ENCODE measurements at regions of chr20 and their contacts with region 1.

Region 1: DNA sequence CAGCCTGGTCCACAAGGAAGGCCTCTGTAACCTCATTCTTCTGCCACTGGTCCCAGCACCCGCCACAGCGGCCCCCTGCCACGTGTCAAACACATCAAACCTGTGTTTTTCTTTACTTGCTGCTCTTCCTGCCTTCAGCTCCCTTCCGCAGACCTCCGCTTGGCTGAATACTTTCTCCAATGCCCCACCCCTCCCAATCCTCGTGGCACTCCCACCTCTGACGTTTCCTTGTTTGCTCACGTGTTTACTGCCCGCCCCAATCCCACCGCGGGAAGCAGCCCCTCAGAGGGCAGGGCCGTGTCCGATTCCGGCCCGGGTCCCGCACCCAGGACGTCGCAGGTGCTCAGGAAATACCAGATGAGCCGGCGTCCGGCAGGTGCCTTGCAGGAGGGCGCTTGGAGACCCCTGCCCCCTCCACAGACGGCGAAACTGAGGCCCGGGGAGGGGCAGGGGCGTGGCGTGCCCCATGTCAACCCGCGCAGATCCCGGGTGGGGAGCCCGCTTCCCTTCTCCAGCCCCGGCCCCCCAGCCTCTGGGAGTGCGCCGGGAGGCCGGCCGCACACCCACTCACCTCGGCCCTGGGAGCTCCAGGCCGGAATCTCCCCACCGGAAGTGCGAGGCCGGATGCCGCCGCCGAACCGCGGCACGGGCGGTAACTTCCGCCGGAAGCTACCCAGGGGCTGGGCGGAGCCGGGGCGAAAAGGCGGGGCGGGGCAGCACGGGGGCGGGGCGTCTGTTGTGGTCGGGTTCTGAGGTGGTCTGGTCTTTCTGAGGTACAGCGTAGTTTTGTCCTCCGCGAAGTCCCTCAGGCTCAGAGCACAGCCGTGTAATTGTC is 42.4 kb downstream of the ELMO2 start:
- DNase-seq: peak; percentile 80 to 91 (median 85)
- ATAC-seq: peak; percentile 87
- H3K4me3 ChIP-seq: peak overlapping the region; percentile 95
- H3K4me3 Mint-ChIP-seq: peak overlapping the region; percentile 89 to 98 (median 92)
- H3K27ac ChIP-seq: peak overlapping the region; percentile 99
- H3K27ac Mint-ChIP-seq: peak overlapping the region; percentile 77 to 98 (median 95)
- H3K4me1 ChIP-seq: peaks cover 60 to 67% of the 10 kb centered on the region in 2 donors
- H3K4me1 Mint-ChIP-seq: peaks cover 54 to 92% (median 74%) of the 10 kb centered on the region in 7 donors
- H3K27me3 ChIP-seq: no peaks in the 10 kb centered on the region
- H3K27me3 Mint-ChIP-seq: no peaks in the 10 kb centered on the region

Region 2: DNA sequence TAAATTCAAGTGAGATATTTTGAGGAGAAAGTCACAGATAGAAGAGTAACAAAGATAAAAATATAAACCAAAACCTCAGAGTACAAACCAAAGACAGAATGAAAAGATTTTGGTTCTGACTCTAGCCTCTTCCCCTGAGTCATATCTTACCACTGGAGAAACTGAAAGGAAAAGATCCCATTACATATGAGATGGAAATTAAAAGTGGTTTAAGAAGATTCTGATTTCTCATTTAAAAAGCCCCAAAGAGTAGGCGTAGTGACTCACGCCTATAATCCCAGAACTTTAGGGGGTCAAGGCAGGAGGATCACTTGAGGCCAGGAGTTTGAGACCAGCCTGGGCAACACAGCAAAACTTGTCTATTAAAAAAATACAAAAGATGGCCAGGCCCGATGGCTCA is 611.3 kb before region 1 on chr20:
- CTCF ChIA-PET with region 1: no interaction called
- POLR2A ChIA-PET with region 1: no interaction called
- intact Hi-C with region 1: no loop called
- DNase-seq: peak in 1 of 9 donors; percentile 28
- ATAC-seq: no peak
- H3K4me3 ChIP-seq: no peak overlapping the region
- H3K4me3 Mint-ChIP-seq: no peak overlapping the region
- H3K27ac ChIP-seq: no peak overlapping the region
- H3K27ac Mint-ChIP-seq: no peak overlapping the region
- H3K4me1 ChIP-seq: no peaks in the 10 kb centered on the region
- H3K4me1 Mint-ChIP-seq: peaks cover 0 to 6% (median 0%) of the 10 kb centered on the region in 7 donors
- H3K27me3 ChIP-seq: no peaks in the 10 kb centered on the region
- H3K27me3 Mint-ChIP-seq: peaks cover 5 to 30% (median 21%) of the 10 kb centered on the region in 5 donors

Region 3: DNA sequence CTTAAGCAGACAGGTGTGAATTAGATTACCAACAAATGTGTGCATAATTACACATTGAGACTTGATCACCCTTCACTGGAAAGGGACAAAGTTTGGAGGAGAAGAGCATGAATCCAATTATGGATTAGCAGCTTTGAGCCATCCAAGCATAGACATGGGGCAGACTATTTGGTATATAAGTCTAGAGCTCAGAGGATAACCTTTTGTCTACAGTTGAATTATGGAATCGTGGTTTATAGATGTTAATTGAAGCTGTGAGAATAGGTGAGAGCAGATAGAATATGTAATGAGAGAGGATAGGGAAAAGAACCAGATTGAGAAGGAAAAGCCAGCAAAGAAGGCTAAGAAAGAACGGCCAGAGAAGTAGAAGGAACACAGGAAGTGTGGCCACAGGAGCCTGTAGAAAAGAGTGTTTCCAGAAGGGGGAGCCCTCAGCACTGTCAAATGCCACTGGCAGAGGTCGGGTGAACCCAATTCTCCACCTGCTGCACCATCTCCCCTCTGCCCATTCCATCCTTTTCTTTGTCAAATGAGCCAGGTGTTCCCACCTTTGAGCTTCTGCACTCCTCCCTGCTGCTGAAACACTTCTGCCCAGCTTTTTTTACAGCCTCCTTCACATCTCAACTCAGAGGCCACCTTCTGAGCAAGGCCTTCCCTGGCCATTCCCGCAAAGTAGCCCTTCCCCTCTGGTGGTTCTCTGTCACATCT is 564.9 kb before region 1 on chr20:
- CTCF ChIA-PET with region 1: no interaction called
- POLR2A ChIA-PET with region 1: no interaction called
- intact Hi-C with region 1: loop called in 1 of 2 experiments (anchors 10 kb)
- DNase-seq: peak; percentile 25 to 70 (median 58)
- ATAC-seq: peak; percentile 96
- H3K4me3 ChIP-seq: no peak overlapping the region
- H3K4me3 Mint-ChIP-seq: no peak overlapping the region
- H3K27ac ChIP-seq: peak overlapping the region; percentile 24
- H3K27ac Mint-ChIP-seq: peak overlapping the region in 8 of 9 donors; percentile 1 to 92 (median 52)
- H3K4me1 ChIP-seq: peaks cover 4 to 7% of the 10 kb centered on the region in 2 donors
- H3K4me1 Mint-ChIP-seq: peaks cover 9 to 21% (median 11%) of the 10 kb centered on the region in 7 donors
- H3K27me3 ChIP-seq: no peaks in the 10 kb centered on the region
- H3K27me3 Mint-ChIP-seq: no peaks in the 10 kb centered on the region

Region 4: GRCh38 chr20:46089417-46090388 is 274.3 kb before region 1 on chr20 and contains the start of gene NCOA5:
- CTCF ChIA-PET with region 1: no interaction called
- POLR2A ChIA-PET with region 1: no interaction called
- intact Hi-C with region 1: loop called in 1 of 2 experiments (anchors 1 kb)
- DNase-seq: peak; percentile 90 to 95 (median 94)
- ATAC-seq: peak; percentile 98
- H3K4me3 ChIP-seq: peak within 1 kb of the TSS; percentile 73
- H3K4me3 Mint-ChIP-seq: peak within 1 kb of the TSS; percentile 86 to 95 (median 90)
- H3K27ac ChIP-seq: peak within 1 kb of the TSS; percentile 89
- H3K27ac Mint-ChIP-seq: peak within 1 kb of the TSS; percentile 86 to 95 (median 90)
- H3K4me1 ChIP-seq: peaks cover 24 to 36% of the 10 kb centered on the region in 2 donors
- H3K4me1 Mint-ChIP-seq: peaks cover 29 to 53% (median 51%) of the 10 kb centered on the region in 7 donors
- H3K27me3 ChIP-seq: no peaks in the 10 kb centered on the region
- H3K27me3 Mint-ChIP-seq: no peaks in the 10 kb centered on the region
- total RNA-seq, gene NCOA5: 15.7 to 43.8 (median 39.4) TPM

Region 5: GRCh38 chr20:46343348-46343974 is 20.6 kb before region 1 on chr20:
- CTCF ChIA-PET with region 1: interaction called, 4 read pairs
- POLR2A ChIA-PET with region 1: interaction called, 16 read pairs
- intact Hi-C with region 1: loop called in 1 of 2 experiments (anchors 1 kb)
- DNase-seq: no peak
- ATAC-seq: peak; percentile 36
- H3K4me3 ChIP-seq: peak overlapping the region; percentile 32
- H3K4me3 Mint-ChIP-seq: peak overlapping the region in 9 of 10 donors; percentile 78 to 86 (median 83)
- H3K27ac ChIP-seq: no peak overlapping the region
- H3K27ac Mint-ChIP-seq: peak overlapping the region in 7 of 9 donors; percentile 47 to 83 (median 76)
- H3K4me1 ChIP-seq: peaks cover 8 to 15% of the 10 kb centered on the region in 2 donors
- H3K4me1 Mint-ChIP-seq: peaks cover 10 to 46% (median 32%) of the 10 kb centered on the region in 7 donors
- H3K27me3 ChIP-seq: peaks cover 0 to 2% of the 10 kb centered on the region in 2 donors
- H3K27me3 Mint-ChIP-seq: peaks cover 6 to 42% (median 15%) of the 10 kb centered on the region in 5 donors

Region 6: DNA sequence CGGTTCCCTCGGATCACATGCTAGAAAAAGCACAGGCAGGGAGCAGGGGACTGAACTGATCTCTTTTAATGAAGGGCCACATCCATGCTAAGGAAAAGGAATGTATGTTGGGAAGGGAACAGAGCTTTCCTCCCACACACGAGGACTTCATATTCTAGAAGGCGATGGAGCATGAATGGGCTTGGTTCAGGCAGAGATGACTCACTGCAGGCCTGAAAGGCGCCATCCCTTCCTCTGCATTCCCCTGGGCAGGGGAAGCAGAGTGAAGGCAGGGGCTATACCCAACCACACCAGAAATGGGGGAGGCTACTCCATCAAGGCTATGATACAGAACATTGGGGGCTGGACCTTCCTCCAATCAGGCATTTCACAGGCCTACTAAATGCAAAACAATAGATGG is 11.8 kb after region 1 on chr20:
- CTCF ChIA-PET with region 1: no interaction called
- POLR2A ChIA-PET with region 1: interaction called, 44 read pairs
- intact Hi-C with region 1: no loop called
- DNase-seq: no peak
- ATAC-seq: no peak
- H3K4me3 ChIP-seq: no peak overlapping the region
- H3K4me3 Mint-ChIP-seq: no peak overlapping the region
- H3K27ac ChIP-seq: no peak overlapping the region
- H3K27ac Mint-ChIP-seq: peak overlapping the region in 4 of 9 donors; percentile 51 to 81 (median 58)
- H3K4me1 ChIP-seq: no peaks in the 10 kb centered on the region
- H3K4me1 Mint-ChIP-seq: peaks cover 0 to 19% (median 0%) of the 10 kb centered on the region in 7 donors
- H3K27me3 ChIP-seq: no peaks in the 10 kb centered on the region
- H3K27me3 Mint-ChIP-seq: no peaks in the 10 kb centered on the region

Region 7: DNA sequence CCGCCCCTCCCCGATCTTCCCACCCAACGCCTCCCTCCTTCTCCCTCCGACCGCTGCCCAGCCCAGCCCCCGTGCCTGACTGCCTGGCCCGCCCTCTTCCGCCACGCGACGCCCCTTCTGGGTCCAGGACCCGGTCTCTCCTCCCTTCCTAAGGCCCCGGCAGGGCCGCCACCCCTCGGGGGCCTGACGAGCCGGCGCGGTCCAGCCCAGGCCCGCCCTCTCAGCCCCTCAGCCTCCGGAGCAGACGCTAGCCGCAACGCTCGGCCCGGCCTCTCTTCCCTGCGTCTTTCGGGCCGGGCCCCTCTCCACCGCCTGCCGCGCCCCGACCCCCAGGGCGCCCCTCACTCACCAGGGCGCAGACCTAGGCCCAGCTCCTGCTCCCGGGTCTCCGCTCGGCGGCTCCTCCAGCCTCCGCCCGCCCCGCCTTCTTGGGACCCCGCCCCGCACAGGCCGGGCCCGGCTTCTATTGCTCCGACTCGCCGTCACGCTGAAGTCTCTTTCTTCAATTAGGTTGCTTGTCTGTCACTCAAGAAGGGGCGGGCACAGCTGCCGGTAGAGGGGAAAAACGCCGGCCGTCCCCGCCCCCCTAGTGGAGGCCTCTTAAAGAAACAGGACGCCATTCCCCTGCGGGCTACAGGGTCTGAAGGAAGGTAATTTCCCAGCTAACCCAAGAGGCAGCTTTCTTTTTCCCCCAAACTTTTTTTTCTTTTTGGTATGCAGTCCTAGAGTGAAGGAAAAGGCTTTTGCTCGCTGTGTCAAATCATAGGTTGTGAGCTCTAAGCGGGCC is 42.4 kb after region 1 on chr20 and contains the start of gene ELMO2:
- CTCF ChIA-PET with region 1: interaction called, 17 read pairs
- POLR2A ChIA-PET with region 1: interaction called, 69 read pairs
- intact Hi-C with region 1: loop called (anchors 1 kb)
- DNase-seq: peak; percentile 81 to 97 (median 94)
- ATAC-seq: peak; percentile 95
- H3K4me3 ChIP-seq: peak within 1 kb of the TSS; percentile 86
- H3K4me3 Mint-ChIP-seq: peak within 1 kb of the TSS; percentile 88 to 97 (median 95)
- H3K27ac ChIP-seq: peak within 1 kb of the TSS; percentile 97
- H3K27ac Mint-ChIP-seq: peak within 1 kb of the TSS; percentile 88 to 97 (median 93)
- H3K4me1 ChIP-seq: peaks cover 38 to 50% of the 10 kb centered on the region in 2 donors
- H3K4me1 Mint-ChIP-seq: peaks cover 44 to 78% (median 70%) of the 10 kb centered on the region in 7 donors
- H3K27me3 ChIP-seq: no peaks in the 10 kb centered on the region
- H3K27me3 Mint-ChIP-seq: peaks cover 0 to 3% (median 0%) of the 10 kb centered on the region in 5 donors
- total RNA-seq, gene ELMO2: 50.8 to 104 (median 52.3) TPM

Region 8: GRCh38 chr20:47356526-47357295 is 992.7 kb after region 1 on chr20 and contains the start of gene ZMYND8:
- CTCF ChIA-PET with region 1: no interaction called
- POLR2A ChIA-PET with region 1: no interaction called
- intact Hi-C with region 1: loop called in 1 of 2 experiments (anchors 10 kb)
- DNase-seq: peak; percentile 88 to 100 (median 98)
- ATAC-seq: peak; percentile 91
- H3K4me3 ChIP-seq: peak within 1 kb of the TSS; percentile 75
- H3K4me3 Mint-ChIP-seq: peak within 1 kb of the TSS in 4 of 10 donors; percentile 88 to 95 (median 92)
- H3K27ac ChIP-seq: peak within 1 kb of the TSS; percentile 86
- H3K27ac Mint-ChIP-seq: peak within 1 kb of the TSS in 7 of 9 donors; percentile 97 to 100 (median 99)
- H3K4me1 ChIP-seq: peaks cover 47 to 65% of the 10 kb centered on the region in 2 donors
- H3K4me1 Mint-ChIP-seq: peaks cover 51 to 74% (median 53%) of the 10 kb centered on the region in 7 donors
- H3K27me3 ChIP-seq: no peaks in the 10 kb centered on the region
- H3K27me3 Mint-ChIP-seq: no peaks in the 10 kb centered on the region
- total RNA-seq, gene ZMYND8: 54.5 to 83.0 (median 68.5) TPM

Measured in naive thymus-derived CD4-positive, alpha-beta T cell (primary cell).